Ascending aorta (tissue), 2 donors: ENCODE measurements at regions of chr9 and their contacts with region 1.

Region 1: GRCh38 chr9:72038890-72039410 is 21.5 kb downstream of the C9orf57 start:
- DNase-seq: peak in 1 of 2 donors; percentile 80
- H3K4me3 ChIP-seq: no peak overlapping the region
- H3K27ac ChIP-seq: no peak overlapping the region
- H3K4me1 ChIP-seq: no peaks in the 10 kb centered on the region
- H3K27me3 ChIP-seq: no peaks in the 10 kb centered on the region
- CTCF ChIP-seq: peak; percentile 83 to 95 (median 94)

Region 2: GRCh38 chr9:72271613-72272478 is 232.9 kb after region 1 on chr9:
- intact Hi-C with region 1: loop called (anchors 1 kb)
- DNase-seq: no peak
- H3K4me3 ChIP-seq: no peak overlapping the region
- H3K27ac ChIP-seq: no peak overlapping the region
- H3K4me1 ChIP-seq: no peaks in the 10 kb centered on the region
- H3K27me3 ChIP-seq: no peaks in the 10 kb centered on the region
- CTCF ChIP-seq: peak; percentile 60 to 89 (median 82)